ENCODE measurements at regions of chr22 and their contacts with region 1.

Region 1: DNA sequence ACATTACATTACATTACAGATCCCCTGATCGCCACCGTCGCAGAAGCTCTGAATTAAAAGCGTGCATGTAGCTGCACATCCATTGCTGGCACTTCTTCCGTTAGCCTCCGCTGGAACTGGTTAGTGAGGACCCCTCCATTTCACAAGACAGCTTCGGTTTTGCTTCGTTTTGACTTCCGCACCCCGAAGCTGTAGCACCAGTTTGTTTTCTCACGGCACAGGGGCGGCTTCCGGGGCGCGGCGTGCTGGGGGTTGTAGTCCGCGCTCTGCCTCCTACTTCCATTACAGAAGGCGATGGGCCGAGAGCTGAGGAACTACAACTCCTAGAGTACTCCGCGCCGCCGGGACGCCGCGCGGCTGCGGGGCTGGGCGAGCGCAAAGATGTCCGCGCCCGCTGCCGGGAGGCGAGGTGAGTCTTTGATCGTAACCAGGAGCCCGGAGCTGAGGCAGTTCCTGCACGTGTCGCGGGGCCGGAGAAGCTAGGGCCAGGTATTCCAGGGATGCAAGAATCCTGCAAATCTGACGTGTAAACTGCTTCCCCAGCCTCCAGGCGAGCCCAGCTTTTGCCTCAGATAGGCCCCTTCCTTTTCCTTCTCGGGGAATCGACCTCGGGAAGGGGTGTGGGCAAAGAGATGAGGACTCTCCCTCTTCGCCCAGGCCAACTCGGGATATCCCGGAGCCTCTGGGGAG is at the start of gene PEX26:
- DNase-seq: peak; percentile 81 to 86
- H3K4me3 ChIP-seq: peak within 1 kb of the TSS; percentile 88 to 99 (median 97)
- H3K27ac ChIP-seq: peak within 1 kb of the TSS; percentile 84
- H3K4me1 ChIP-seq: 0 out of 7 replicates have a peak, but pooled peaks cover 0 to 3% (median 0%) of the 10 kb centered on the region in 4 experiments
- H3K27me3 ChIP-seq: no peaks in the 10 kb centered on the region
- CTCF ChIP-seq: no peak
- EP300 ChIP-seq: no peak
- POLR2A ChIP-seq: peak in 1 of 2 experiments; percentile 79; a peak in 2 of 3 replicates
- RAD21 ChIP-seq: no peak
- total RNA-seq, gene PEX26: 46.6 and 49.0 TPM in 2 replicates

Region 2: GRCh38 chr22:17785185-17786184 is 292.3 kb before region 1 on chr22:
- CTCF ChIA-PET with region 1: interaction called, 27 read pairs
- POLR2A ChIA-PET with region 1: interaction called, 6 read pairs
- DNase-seq: peak; percentile 74 to 96
- H3K4me3 ChIP-seq: no peak overlapping the region
- H3K27ac ChIP-seq: no peak overlapping the region
- H3K4me1 ChIP-seq: peaks cover 0 to 5% (median under 1%) of the 10 kb centered on the region in 4 experiments; a peak in 1 of 7 replicates
- H3K27me3 ChIP-seq: no peaks in the 10 kb centered on the region
- CTCF ChIP-seq: peak; percentile 89 to 99 (median 98)
- EP300 ChIP-seq: no peak
- POLR2A ChIP-seq: no peak
- RAD21 ChIP-seq: peak; percentile 74 to 79

Region 3: GRCh38 chr22:17830043-17830961 is 247.5 kb before region 1 on chr22:
- CTCF ChIA-PET with region 1: interaction called, 163 read pairs
- POLR2A ChIA-PET with region 1: interaction called, 3 read pairs
- DNase-seq: peak; percentile 81 to 98
- H3K4me3 ChIP-seq: no peak overlapping the region
- H3K27ac ChIP-seq: no peak overlapping the region
- H3K4me1 ChIP-seq: no peaks in the 10 kb centered on the region
- H3K27me3 ChIP-seq: no peaks in the 10 kb centered on the region
- CTCF ChIP-seq: peak; percentile 94 to 100 (median 98)
- EP300 ChIP-seq: no peak
- POLR2A ChIP-seq: no peak
- RAD21 ChIP-seq: peak; percentile 95 to 99

Region 4: GRCh38 chr22:17903564-17904295 is 174.1 kb before region 1 on chr22:
- CTCF ChIA-PET with region 1: interaction called, 18 read pairs
- POLR2A ChIA-PET with region 1: no interaction called
- DNase-seq: peak in 1 of 2 experiments; percentile 54
- H3K4me3 ChIP-seq: no peak overlapping the region; a peak in 1 of 8 replicates
- H3K27ac ChIP-seq: no peak overlapping the region
- H3K4me1 ChIP-seq: peaks cover 3 to 8% (median 7%) of the 10 kb centered on the region in 4 experiments; a peak in 5 of 7 replicates
- H3K27me3 ChIP-seq: no peaks in the 10 kb centered on the region
- CTCF ChIP-seq: 0 out of 4 replicates have a peak, but pooled peaks of 1 of the 3 experiments have one; percentile 6
- EP300 ChIP-seq: no peak
- POLR2A ChIP-seq: no peak
- RAD21 ChIP-seq: no peak; a peak in 1 of 4 replicates

Region 5: GRCh38 chr22:17920145-17920605 is 157.6 kb before region 1 on chr22:
- CTCF ChIA-PET with region 1: interaction called, 20 read pairs
- POLR2A ChIA-PET with region 1: no interaction called
- DNase-seq: no peak
- H3K4me3 ChIP-seq: no peak overlapping the region; a peak in 1 of 8 replicates
- H3K27ac ChIP-seq: no peak overlapping the region
- H3K4me1 ChIP-seq: peaks cover 16 to 32% (median 23%) of the 10 kb centered on the region in 4 experiments
- H3K27me3 ChIP-seq: no peaks in the 10 kb centered on the region
- CTCF ChIP-seq: no peak
- EP300 ChIP-seq: no peak
- POLR2A ChIP-seq: no peak
- RAD21 ChIP-seq: peak in 1 of 2 experiments; percentile 11; a peak in 2 of 4 replicates

Region 6: DNA sequence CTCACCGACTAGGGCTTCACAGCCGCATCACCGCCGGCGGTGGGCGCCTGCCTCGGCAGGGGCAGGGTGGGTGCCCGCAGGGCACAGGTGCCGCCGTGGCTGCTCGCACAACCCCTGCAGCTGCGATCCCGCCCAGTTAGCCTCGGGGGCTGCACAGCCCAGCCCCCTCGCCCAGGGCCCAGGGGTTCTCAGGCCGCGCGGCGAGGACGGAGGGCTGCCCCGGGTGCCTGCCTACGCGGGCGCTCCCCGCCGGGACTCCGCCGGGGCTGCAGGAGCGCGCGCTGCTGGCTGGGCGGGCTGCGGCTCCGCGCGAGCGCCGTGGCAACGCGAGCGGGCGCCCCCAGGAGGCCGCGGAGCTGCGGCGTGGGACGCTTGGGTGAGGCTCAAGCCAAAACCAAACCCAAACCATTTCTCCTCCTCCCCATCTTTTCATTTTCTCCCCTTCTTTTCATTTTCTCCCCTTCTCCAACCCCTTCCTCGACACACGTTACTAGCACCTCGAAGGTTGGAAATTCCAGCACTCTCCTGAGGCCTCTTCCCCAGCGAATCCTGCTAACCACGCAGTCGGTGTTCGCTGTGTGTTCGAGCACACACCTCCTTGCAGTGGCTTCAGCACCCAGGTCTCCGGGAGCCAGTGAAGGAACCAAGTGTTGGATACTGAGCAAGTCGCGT is 53.4 kb before region 1 on chr22 and contains the start of gene MICAL3:
- CTCF ChIA-PET with region 1: interaction called, 11 read pairs
- POLR2A ChIA-PET with region 1: interaction called, 6 read pairs
- DNase-seq: peak in 1 of 2 experiments; percentile 74
- H3K4me3 ChIP-seq: peak within 1 kb of the TSS; percentile 42 to 66 (median 56)
- H3K27ac ChIP-seq: no peak within 1 kb of the TSS
- H3K4me1 ChIP-seq: peaks cover 0 to 10% (median 5%) of the 10 kb centered on the region in 4 experiments; a peak in 6 of 7 replicates
- H3K27me3 ChIP-seq: peaks cover 15 to 33% (median 25%) of the 10 kb centered on the region in 4 experiments
- CTCF ChIP-seq: peak; percentile 30 to 46 (median 38); a peak in 3 of 4 replicates
- EP300 ChIP-seq: no peak
- POLR2A ChIP-seq: no peak
- RAD21 ChIP-seq: peak in 1 of 2 experiments; percentile 36; a peak in 1 of 4 replicates
- total RNA-seq, gene MICAL3: 39.2 and 41.8 TPM in 2 replicates

Region 7: DNA sequence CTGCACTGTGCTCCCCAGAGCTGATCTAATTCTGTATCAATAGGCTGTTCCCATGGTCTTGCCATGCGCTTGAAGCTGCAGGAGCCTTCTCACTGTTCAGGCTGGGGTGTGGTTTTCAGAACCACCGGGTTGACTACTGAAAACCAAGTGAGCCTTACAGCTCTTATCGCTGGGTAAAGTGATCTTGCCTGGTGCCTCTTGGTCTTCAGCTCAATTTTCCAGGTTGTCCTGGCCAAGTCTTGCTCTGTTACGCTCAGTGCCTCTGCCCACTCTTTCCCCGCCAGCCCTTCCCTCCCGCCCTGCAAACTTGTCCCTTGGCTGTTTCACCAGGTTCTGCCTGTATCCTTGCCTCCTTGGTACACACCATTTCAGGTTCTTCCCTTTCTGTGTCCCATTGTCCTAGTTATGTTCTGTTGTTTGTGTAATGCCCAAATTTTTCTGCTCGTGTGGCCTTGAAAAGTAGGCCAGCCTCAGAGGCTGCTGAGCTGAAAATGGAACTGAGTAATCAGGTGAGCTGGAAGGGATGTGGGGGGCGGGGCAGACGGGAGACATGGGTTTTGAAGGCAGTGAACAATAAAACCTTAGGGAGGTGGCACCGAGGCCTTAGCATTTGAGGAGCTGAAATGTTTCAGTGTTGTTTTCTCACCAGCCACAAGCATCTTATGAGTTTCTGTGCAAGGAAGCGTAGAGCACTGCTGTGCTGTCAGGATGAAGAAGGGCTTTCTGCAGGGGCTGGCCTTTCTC is 11.2 kb after region 1 on chr22:
- CTCF ChIA-PET with region 1: interaction called, 16 read pairs
- POLR2A ChIA-PET with region 1: interaction called, 11 read pairs
- DNase-seq: no peak
- H3K4me3 ChIP-seq: no peak overlapping the region
- H3K27ac ChIP-seq: no peak overlapping the region
- H3K4me1 ChIP-seq: no peaks in the 10 kb centered on the region
- H3K27me3 ChIP-seq: no peaks in the 10 kb centered on the region
- CTCF ChIP-seq: no peak
- EP300 ChIP-seq: no peak
- POLR2A ChIP-seq: no peak
- RAD21 ChIP-seq: no peak

Region 8: GRCh38 chr22:18130018-18130417 is 52.2 kb after region 1 on chr22:
- CTCF ChIA-PET with region 1: no interaction called
- POLR2A ChIA-PET with region 1: no interaction called
- DNase-seq: no peak
- H3K4me3 ChIP-seq: no peak overlapping the region
- H3K27ac ChIP-seq: no peak overlapping the region
- H3K4me1 ChIP-seq: no peaks in the 10 kb centered on the region
- H3K27me3 ChIP-seq: no peaks in the 10 kb centered on the region
- CTCF ChIP-seq: no peak
- EP300 ChIP-seq: no peak
- POLR2A ChIP-seq: no peak
- RAD21 ChIP-seq: no peak

Measured in H1 (cell line).